Right cardiac atrium (tissue), 5 donors: ENCODE measurements at regions of chr19 and their contacts with region 1.

Region 1: DNA sequence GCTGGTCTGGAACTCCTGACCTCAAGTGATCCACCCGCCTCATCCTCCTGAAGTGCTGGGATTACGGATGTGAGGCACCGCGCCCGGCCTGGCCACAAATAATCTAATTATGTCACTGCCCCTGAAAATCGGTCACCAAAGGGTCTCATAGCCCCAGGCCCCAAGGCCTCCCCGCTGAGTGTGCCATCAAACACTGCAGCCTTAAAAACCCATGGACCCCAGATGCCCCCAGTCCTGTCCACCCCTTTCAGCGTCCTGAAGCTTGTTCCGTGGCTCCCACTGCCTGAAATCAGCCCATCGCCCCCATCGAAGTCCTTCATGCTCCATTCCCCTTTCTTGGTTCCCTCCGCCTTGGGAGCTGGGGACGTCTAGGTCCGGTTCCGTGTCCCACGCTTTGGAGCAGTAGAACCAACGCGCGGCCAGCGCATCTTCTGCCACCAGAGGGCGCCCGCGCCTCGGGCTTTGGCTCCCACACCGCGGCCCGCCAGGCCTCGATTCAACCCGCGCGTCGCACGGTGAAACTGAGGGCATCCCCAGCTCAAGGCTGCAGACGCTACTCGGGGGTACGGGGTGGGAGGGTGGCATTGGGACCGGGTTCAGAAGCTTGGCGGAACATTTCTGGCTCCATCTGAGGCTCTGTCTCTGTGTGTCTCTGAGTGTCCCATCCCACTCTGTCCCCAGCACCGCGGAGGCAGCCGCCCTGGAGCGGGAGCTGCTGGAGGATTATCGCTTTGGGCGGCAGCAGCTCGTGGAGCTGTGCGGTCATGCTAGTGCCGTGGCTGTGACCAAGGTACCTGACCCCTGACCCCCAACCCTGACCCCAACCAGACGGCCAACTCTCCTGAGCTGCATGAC is 3.5 kb downstream of the YJEFN3 start:
- DNase-seq: peak; percentile 85 to 95 (median 94)
- ATAC-seq: peak; percentile 66 to 67
- H3K4me3 ChIP-seq: no peak overlapping the region
- H3K27ac ChIP-seq: no peak overlapping the region
- H3K4me1 ChIP-seq: no peaks in the 10 kb centered on the region
- H3K27me3 ChIP-seq: no peaks in the 10 kb centered on the region

Region 2: GRCh38 chr19:19643158-19644053 is 111.2 kb after region 1 on chr19 and contains the start of gene GMIP:
- intact Hi-C with region 1: loop called (anchors 2 to 10 kb)
- DNase-seq: peak; percentile 79 to 93 (median 92)
- ATAC-seq: peak; percentile 85
- H3K4me3 ChIP-seq: peak within 1 kb of the TSS; percentile 67
- H3K27ac ChIP-seq: no peak within 1 kb of the TSS
- H3K4me1 ChIP-seq: peaks cover 2% of the 10 kb centered on the region
- H3K27me3 ChIP-seq: no peaks in the 10 kb centered on the region
- total RNA-seq, gene GMIP: 3.1 to 6.3 (median 5.3) TPM

Region 3: DNA sequence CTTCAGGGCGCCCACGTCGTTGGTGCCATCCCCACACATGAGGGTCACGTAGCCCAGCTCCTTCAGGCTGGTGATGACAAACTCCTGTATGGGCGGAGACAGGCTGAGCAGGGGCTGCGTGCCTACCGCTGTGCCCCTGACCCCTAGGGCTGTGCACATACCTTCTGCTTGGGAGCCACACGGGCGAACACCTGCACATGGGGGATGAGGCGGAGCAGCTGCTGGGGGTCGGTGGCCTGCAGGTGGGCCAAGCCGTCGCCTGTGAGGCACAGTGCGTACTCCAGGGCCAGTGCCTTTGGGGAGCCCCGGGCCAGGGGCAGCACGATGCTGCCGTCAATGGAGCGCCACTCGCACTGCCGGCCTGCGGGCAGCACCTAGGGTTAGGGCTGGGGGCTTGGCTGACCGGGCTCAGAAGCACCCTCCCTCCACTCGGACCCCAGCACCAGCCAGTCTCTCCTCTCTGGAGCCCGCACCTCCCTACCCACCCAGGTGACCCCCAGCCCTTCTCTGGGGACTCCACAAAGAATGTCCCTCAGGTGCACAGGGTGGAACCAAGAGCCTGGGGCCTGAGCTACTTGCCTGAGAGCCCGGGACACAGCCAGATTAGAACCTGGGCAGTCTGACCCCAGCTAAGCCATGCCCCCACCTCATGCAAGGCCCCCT is 117.5 kb after region 1 on chr19:
- intact Hi-C with region 1: loop called in 2 of 4 experiments (anchors 5 to 10 kb)
- DNase-seq: peak in 2 of 3 donors; percentile 38 to 46
- ATAC-seq: no peak
- H3K4me3 ChIP-seq: no peak overlapping the region
- H3K27ac ChIP-seq: no peak overlapping the region
- H3K4me1 ChIP-seq: no peaks in the 10 kb centered on the region
- H3K27me3 ChIP-seq: no peaks in the 10 kb centered on the region

Region 4: DNA sequence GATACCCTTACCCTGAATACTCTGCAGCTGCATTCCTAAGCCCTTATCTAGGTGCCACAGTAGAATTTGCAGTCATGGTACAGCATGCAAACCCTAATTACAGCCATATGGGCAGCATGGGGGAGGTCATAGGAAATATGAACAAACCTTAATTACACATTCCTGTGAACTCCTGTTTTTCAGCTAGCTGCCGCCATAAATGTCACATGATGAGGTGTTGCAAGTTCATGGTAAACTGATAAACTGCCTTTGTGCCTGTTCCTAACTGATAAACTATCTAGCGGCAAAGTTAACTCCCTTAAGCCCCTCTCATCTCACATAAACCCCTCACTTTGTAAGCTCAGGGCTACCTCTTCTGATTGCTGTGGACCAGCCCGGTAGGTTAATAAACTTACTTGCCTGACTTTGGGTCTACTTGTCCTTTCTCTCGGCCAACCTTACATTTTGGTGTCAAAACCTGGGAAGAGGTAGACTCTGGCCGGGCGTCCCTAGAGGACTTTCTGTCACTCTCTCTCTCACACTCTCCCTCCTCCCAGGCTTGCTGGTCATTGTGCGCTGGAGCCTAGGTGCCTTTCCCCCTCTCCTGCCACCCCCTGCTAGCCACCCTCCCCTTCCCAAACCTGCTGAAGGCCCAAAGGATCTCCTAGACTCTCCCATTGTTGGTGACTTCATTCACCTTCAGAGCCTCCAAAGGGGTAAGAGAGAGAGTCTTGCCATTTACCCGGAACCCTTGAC is 411.8 kb after region 1 on chr19:
- intact Hi-C with region 1: loop called in 1 of 4 experiments (anchors 10 kb)
- DNase-seq: peak in 1 of 3 donors; percentile 19
- ATAC-seq: no peak
- H3K4me3 ChIP-seq: no peak overlapping the region
- H3K27ac ChIP-seq: no peak overlapping the region
- H3K4me1 ChIP-seq: no peaks in the 10 kb centered on the region
- H3K27me3 ChIP-seq: no peaks in the 10 kb centered on the region

Region 5: GRCh38 chr19:19956434-19957075 is 424.4 kb after region 1 on chr19:
- intact Hi-C with region 1: loop called in 2 of 4 experiments (anchors 5 to 10 kb)
- DNase-seq: peak in 1 of 3 donors; percentile 53
- ATAC-seq: no peak
- H3K4me3 ChIP-seq: no peak overlapping the region
- H3K27ac ChIP-seq: no peak overlapping the region
- H3K4me1 ChIP-seq: no peaks in the 10 kb centered on the region
- H3K27me3 ChIP-seq: no peaks in the 10 kb centered on the region